ENCODE measurements at regions of chr15 and their contacts with region 1.

Region 1: DNA sequence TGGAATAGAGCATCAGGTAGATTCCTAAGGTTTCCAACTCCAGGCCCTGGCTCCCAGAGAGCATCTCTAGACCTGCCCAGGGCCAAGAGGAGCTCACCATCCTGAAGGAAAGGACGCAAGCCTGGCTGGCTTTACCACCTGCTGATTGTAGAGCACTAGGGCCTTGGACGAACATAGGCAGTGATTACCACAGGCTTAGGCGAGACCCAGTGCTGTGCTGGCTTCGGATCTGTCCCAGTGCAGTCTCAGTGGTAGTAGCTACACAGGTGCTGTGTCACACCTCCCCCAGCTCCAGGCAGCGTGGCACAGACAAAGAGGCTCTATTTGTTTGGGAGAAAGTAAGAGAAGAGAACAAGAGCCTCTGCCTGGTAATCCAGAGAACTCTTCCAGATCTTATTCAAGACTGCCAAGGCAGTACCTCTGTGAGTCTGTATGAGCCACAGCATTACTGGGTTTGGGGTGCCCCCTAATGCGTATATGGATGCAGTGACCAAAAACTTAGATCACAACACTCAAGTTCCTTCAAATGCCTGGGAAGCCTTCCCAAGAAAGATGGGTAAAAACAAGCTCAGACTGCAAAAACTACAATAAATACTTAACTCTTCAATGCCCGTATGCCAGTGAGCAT is 25.4 kb downstream of the ISG20 start:
- DNase-seq: peak in 7 of 9 donors; percentile 60 to 75 (median 67)
- ATAC-seq: peak; percentile 84
- H3K4me3 ChIP-seq: no peak overlapping the region
- H3K4me3 Mint-ChIP-seq: no peak overlapping the region
- H3K27ac ChIP-seq: no peak overlapping the region
- H3K27ac Mint-ChIP-seq: peak overlapping the region in 8 of 9 donors; percentile 52 to 84 (median 66)
- H3K4me1 ChIP-seq: peaks cover 0 to 34% of the 10 kb centered on the region in 2 donors
- H3K4me1 Mint-ChIP-seq: peaks cover 6 to 52% (median 32%) of the 10 kb centered on the region in 7 donors
- H3K27me3 ChIP-seq: no peaks in the 10 kb centered on the region
- H3K27me3 Mint-ChIP-seq: peaks cover 0 to 10% (median 8%) of the 10 kb centered on the region in 5 donors

Region 2: DNA sequence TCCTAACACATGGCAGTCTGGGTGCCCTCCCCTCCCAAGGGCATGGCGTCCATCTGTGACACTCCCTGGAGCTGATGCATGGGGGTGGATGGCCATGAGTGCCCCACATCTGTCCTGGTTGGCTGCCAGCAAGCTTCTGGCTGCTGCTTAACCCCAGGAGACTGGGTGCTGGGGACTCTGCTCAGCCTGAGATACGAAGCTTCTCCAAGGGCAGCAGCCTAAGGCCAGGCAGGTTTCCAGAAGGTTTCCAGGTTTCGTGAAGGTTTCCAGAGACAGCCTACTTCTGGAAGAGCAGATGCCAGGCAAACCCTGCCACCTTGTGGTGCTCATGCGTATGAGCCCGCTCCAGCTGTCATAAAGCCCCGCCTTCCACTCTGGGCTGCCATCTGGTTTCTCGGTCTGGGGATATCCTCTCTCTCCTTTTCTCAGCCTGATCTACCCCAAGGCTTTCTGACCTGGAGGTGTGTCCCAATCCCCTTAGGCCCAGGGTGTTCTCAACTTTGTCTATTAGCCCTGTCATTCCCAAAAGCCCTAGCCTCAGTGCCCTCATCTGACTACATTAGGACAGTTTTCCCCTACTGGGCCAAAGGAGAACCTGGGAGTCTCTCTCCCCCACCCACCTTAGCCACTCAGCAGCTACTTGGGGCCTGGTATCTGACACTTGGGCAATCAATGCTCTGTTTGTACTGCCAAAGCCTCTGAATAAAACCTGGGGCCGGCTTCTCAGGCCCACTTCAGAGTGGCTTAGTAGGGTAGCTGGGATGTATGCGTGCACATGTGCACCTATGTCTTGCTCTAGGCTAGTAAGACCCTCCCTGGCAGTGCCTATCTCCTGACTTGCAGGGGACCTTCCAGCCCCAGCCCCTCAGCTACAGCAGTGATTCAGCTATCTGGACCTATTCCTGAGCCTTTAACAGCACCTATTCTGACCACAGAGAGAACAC is 209.1 kb before region 1 on chr15:
- CTCF ChIA-PET with region 1: interaction called, 3 read pairs
- POLR2A ChIA-PET with region 1: no interaction called
- intact Hi-C with region 1: loop called in 1 of 2 experiments (anchors 1 kb)
- DNase-seq: peak in 6 of 9 donors; percentile 14 to 38 (median 26)
- ATAC-seq: peak; percentile 85
- H3K4me3 ChIP-seq: no peak overlapping the region
- H3K4me3 Mint-ChIP-seq: no peak overlapping the region
- H3K27ac ChIP-seq: no peak overlapping the region
- H3K27ac Mint-ChIP-seq: peak overlapping the region in 4 of 9 donors; percentile 10 to 72 (median 54)
- H3K4me1 ChIP-seq: no peaks in the 10 kb centered on the region
- H3K4me1 Mint-ChIP-seq: peaks cover 1 to 9% (median 4%) of the 10 kb centered on the region in 7 donors
- H3K27me3 ChIP-seq: no peaks in the 10 kb centered on the region
- H3K27me3 Mint-ChIP-seq: no peaks in the 10 kb centered on the region

Region 3: GRCh38 chr15:88476635-88477060 is 187.6 kb before region 1 on chr15:
- CTCF ChIA-PET with region 1: interaction called, 5 read pairs
- POLR2A ChIA-PET with region 1: no interaction called
- intact Hi-C with region 1: loop called (anchors 1 kb)
- DNase-seq: peak in 5 of 9 donors; percentile 22 to 45 (median 40)
- ATAC-seq: peak; percentile 55
- H3K4me3 ChIP-seq: no peak overlapping the region
- H3K4me3 Mint-ChIP-seq: no peak overlapping the region
- H3K27ac ChIP-seq: no peak overlapping the region
- H3K27ac Mint-ChIP-seq: no peak overlapping the region
- H3K4me1 ChIP-seq: no peaks in the 10 kb centered on the region
- H3K4me1 Mint-ChIP-seq: peaks cover 0 to 6% (median 0%) of the 10 kb centered on the region in 7 donors
- H3K27me3 ChIP-seq: no peaks in the 10 kb centered on the region
- H3K27me3 Mint-ChIP-seq: no peaks in the 10 kb centered on the region

Region 4: GRCh38 chr15:88546248-88547129 is 117.8 kb before region 1 on chr15 and contains the start of gene DET1:
- CTCF ChIA-PET with region 1: interaction called, 3 read pairs
- POLR2A ChIA-PET with region 1: no interaction called
- intact Hi-C with region 1: loop called in 1 of 2 experiments (anchors 2 kb)
- DNase-seq: peak; percentile 75 to 94 (median 92)
- ATAC-seq: peak; percentile 97
- H3K4me3 ChIP-seq: peak within 1 kb of the TSS; percentile 66
- H3K4me3 Mint-ChIP-seq: peak within 1 kb of the TSS; percentile 80 to 96 (median 90)
- H3K27ac ChIP-seq: peak within 1 kb of the TSS; percentile 81
- H3K27ac Mint-ChIP-seq: peak within 1 kb of the TSS; percentile 85 to 97 (median 92)
- H3K4me1 ChIP-seq: peaks cover 0 to 5% of the 10 kb centered on the region in 2 donors
- H3K4me1 Mint-ChIP-seq: peaks cover 9 to 24% (median 14%) of the 10 kb centered on the region in 7 donors
- H3K27me3 ChIP-seq: no peaks in the 10 kb centered on the region
- H3K27me3 Mint-ChIP-seq: no peaks in the 10 kb centered on the region
- total RNA-seq, gene DET1: 4.5 to 16.5 (median 8.4) TPM

Region 5: GRCh38 chr15:88638626-88639372 is 25.5 kb before region 1 on chr15 and contains the start of gene ISG20:
- CTCF ChIA-PET with region 1: interaction called, 10 read pairs
- POLR2A ChIA-PET with region 1: interaction called, 4 read pairs
- intact Hi-C with region 1: loop called in 1 of 2 experiments (anchors 1 kb)
- DNase-seq: peak; percentile 84 to 100 (median 99)
- ATAC-seq: peak; percentile 94
- H3K4me3 ChIP-seq: peak within 1 kb of the TSS; percentile 70
- H3K4me3 Mint-ChIP-seq: peak within 1 kb of the TSS; percentile 83 to 99 (median 94)
- H3K27ac ChIP-seq: peak within 1 kb of the TSS; percentile 99
- H3K27ac Mint-ChIP-seq: peak within 1 kb of the TSS; percentile 96 to 100 (median 99)
- H3K4me1 ChIP-seq: peaks cover 76 to 81% of the 10 kb centered on the region in 2 donors
- H3K4me1 Mint-ChIP-seq: peaks cover 58 to 87% (median 80%) of the 10 kb centered on the region in 7 donors
- H3K27me3 ChIP-seq: no peaks in the 10 kb centered on the region
- H3K27me3 Mint-ChIP-seq: peaks cover 0 to 2% (median 0%) of the 10 kb centered on the region in 5 donors
- total RNA-seq, gene ISG20: 92.5 to 160 (median 149) TPM

Region 6: GRCh38 chr15:88649286-88649733 is 15.0 kb before region 1 on chr15:
- CTCF ChIA-PET with region 1: interaction called, 29 read pairs
- POLR2A ChIA-PET with region 1: interaction called, 6 read pairs
- intact Hi-C with region 1: no loop called
- DNase-seq: peak in 8 of 9 donors; percentile 44 to 70 (median 60)
- ATAC-seq: peak; percentile 85
- H3K4me3 ChIP-seq: peak overlapping the region; percentile 23
- H3K4me3 Mint-ChIP-seq: peak overlapping the region; percentile 73 to 94 (median 83)
- H3K27ac ChIP-seq: peak overlapping the region; percentile 76
- H3K27ac Mint-ChIP-seq: peak overlapping the region; percentile 92 to 99 (median 97)
- H3K4me1 ChIP-seq: peaks cover 34 to 80% of the 10 kb centered on the region in 2 donors
- H3K4me1 Mint-ChIP-seq: peaks cover 54 to 96% (median 88%) of the 10 kb centered on the region in 7 donors
- H3K27me3 ChIP-seq: no peaks in the 10 kb centered on the region
- H3K27me3 Mint-ChIP-seq: no peaks in the 10 kb centered on the region

Region 7: DNA sequence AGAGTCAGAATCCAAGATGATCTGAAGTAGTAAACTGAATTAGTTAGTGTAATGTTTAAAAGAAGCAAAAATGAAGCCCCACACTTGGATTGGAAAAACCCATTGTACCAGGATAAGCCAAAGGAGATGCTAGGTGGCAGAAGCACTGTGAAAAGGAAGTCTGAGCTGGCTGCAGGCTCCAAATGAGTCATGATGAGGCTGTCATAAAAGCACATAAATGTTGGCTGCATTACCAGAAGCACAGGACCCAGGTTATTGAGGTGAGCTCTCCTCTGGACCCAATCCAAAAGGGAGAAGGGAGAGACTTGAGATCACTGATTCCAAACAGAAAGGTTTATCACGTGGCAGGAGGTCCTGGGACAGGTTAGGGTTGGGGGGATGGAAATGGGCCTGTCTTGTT is 135.8 kb after region 1 on chr15:
- CTCF ChIA-PET with region 1: no interaction called
- POLR2A ChIA-PET with region 1: no interaction called
- intact Hi-C with region 1: no loop called
- DNase-seq: no peak
- ATAC-seq: no peak
- H3K4me3 ChIP-seq: no peak overlapping the region
- H3K4me3 Mint-ChIP-seq: no peak overlapping the region
- H3K27ac ChIP-seq: no peak overlapping the region
- H3K27ac Mint-ChIP-seq: no peak overlapping the region
- H3K4me1 ChIP-seq: no peaks in the 10 kb centered on the region
- H3K4me1 Mint-ChIP-seq: peaks cover 2 to 18% (median 13%) of the 10 kb centered on the region in 7 donors
- H3K27me3 ChIP-seq: peaks cover 0 to 5% of the 10 kb centered on the region in 2 donors
- H3K27me3 Mint-ChIP-seq: peaks cover 59 to 85% (median 74%) of the 10 kb centered on the region in 5 donors